Activated CD4-positive, alpha-beta T cell treated with anti-CD3 and anti-CD28 coated beads, Interleukin-2, amount 10 ng/mL, durations not matched to agents 7 days and 5 days (primary cell): ENCODE measurements at regions of chr19 and their contacts with region 1.

Region 1: DNA sequence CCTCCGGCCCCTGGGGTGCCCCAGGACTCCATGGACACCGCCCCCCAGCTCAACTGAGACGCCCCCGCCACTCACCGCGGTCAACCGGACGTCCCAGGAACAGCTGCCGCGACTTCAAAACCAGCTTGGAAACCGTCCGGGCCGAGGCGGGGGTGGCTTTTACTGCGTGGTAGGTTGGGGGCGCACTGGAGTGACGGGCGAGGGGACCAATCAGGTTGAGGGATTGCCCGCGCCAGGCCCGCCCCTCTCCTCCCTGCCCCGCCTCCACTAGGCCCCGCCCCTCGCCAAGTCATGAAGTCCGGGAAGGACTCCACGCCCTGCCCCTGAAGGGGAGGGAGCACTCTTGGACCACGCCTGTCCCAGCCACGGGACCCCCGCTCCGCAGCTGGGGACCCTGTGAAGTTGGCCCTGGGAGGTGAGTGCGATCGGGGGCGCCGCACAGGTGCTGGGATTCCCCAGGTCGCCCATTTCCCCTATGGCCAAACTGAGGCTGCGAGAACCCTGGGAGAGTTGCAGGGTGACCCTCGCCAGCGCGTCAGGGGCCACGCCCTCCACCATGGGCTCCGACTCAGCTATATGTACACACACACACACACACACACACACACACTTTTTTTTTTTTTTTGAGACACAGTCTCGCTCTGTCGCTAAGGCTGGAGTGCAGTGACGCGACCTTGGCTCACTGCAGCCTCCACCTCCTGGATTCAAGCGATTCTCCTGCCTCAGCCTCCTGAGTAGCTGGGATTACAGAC is at the start of gene PLIN3:
- DNase-seq: peak; percentile 92
- H3K4me3 Mint-ChIP-seq: peak within 1 kb of the TSS; percentile 75
- H3K27ac Mint-ChIP-seq: peak within 1 kb of the TSS; percentile 72
- H3K4me1 Mint-ChIP-seq: peaks cover 22% of the 10 kb centered on the region
- H3K27me3 Mint-ChIP-seq: peaks cover 6% of the 10 kb centered on the region
- total RNA-seq, gene PLIN3: 24.1 to 28.1 TPM

Region 2: GRCh38 chr19:4851551-4852290 is 16.0 kb before region 1 on chr19:
- CTCF ChIA-PET with region 1: interaction called, 10 read pairs
- POLR2A ChIA-PET with region 1: no interaction called
- DNase-seq: peak; percentile 77
- H3K4me3 Mint-ChIP-seq: no peak overlapping the region
- H3K27ac Mint-ChIP-seq: no peak overlapping the region
- H3K4me1 Mint-ChIP-seq: peaks cover 3% of the 10 kb centered on the region
- H3K27me3 Mint-ChIP-seq: no peaks in the 10 kb centered on the region

Region 3: DNA sequence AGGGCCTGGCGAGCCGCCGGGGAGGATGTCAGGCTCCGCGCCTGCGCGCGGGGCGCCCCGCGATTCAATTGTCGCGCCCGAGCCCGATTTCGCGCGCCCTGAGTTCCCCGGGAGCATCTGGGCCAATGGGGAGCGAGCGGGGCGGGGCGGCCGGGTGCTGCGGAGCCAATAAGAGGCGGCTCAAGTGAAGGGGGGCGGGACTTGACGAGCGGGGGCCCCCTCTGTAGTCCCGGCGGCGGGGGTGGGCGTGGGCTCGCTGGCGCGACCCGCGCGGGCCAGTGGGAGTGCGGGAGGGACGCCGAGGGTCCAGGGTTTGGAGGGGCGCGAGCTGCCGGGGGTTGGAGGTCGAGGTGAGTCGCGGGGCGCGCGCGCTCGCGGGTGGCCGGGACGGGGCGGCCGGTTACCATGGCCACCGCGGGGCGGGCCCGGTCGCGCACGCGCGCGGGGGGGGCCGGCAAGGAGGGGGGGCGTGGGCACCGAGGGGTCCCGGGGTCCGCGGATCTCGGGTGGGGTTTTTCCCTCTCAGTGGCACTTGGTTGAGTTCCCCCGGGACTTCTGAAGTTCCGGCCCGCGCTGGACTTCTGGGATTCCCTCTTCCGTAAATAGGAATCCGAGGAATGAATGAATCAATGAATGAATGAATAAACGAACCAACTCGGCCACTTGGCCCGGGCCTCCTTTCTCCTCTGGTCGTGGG is 42.3 kb after region 1 on chr19:
- CTCF ChIA-PET with region 1: interaction called, 27 read pairs
- POLR2A ChIA-PET with region 1: interaction called, 3 read pairs
- DNase-seq: peak; percentile 96
- H3K4me3 Mint-ChIP-seq: peak overlapping the region; percentile 81
- H3K27ac Mint-ChIP-seq: peak overlapping the region; percentile 89
- H3K4me1 Mint-ChIP-seq: peaks cover 53% of the 10 kb centered on the region
- H3K27me3 Mint-ChIP-seq: no peaks in the 10 kb centered on the region

Region 4: DNA sequence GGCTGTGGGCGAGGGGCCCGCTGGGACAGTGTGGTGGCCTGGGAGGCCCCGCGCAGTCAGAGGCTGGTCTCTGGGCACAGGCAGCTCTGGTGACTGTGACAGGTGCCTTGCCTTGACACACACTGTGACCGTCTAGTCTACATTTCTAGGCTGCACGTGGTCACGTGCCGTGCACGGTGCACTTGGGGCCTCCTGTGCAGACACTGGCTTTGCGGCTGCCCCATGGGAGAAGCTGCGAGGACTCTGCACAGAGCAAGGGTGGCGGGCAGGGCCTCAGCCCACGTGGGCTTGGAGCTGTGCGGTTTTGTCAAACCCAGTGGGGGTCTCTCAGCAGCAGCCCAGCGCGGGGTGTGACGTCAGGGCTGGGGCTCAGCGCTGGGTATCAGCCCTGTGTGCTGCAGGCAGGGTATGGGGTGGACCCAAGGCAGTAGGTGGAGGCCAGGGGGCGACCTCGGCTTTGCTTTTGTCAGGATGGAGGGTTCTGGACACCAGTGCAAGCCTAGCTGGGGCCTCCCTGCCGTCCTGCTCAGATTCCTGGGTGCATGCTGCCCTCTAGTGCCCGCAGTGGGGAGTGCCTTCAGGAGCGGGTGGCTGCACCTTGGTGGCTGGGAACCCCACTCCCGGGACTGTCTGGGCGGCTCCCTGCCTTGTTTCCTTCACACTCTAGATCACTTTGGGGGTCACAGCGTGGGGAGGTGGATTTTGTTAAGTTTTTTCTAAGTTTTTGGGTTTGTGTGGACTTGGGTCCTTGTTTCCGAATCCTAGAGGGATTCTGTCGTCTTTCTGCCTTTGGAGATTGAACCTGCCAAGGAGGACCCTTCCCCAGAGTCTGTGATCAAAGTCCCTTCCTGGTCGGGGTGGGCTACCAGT is 163.8 kb after region 1 on chr19:
- CTCF ChIA-PET with region 1: interaction called, 17 read pairs
- POLR2A ChIA-PET with region 1: no interaction called
- DNase-seq: peak; percentile 84
- H3K4me3 Mint-ChIP-seq: no peak overlapping the region
- H3K27ac Mint-ChIP-seq: no peak overlapping the region
- H3K4me1 Mint-ChIP-seq: no peaks in the 10 kb centered on the region
- H3K27me3 Mint-ChIP-seq: no peaks in the 10 kb centered on the region